Thyroid gland (tissue), 4 donors: ENCODE measurements at regions of chr2 and their contacts with region 1.

Region 1: GRCh38 chr2:222982010-222982908 is 69.7 kb upstream of the KCNE4 start:
- DNase-seq: peak; percentile 83 to 86
- H3K4me3 ChIP-seq: no peak overlapping the region
- H3K27ac ChIP-seq: no peak overlapping the region
- H3K4me1 ChIP-seq: peaks cover 6 to 9% of the 10 kb centered on the region in 2 donors
- H3K27me3 ChIP-seq: no peaks in the 10 kb centered on the region
- CTCF ChIP-seq: peak in 5 of 6 experiments; percentile 20 to 77 (median 68)
- POLR2A ChIP-seq: no peak

Region 2: DNA sequence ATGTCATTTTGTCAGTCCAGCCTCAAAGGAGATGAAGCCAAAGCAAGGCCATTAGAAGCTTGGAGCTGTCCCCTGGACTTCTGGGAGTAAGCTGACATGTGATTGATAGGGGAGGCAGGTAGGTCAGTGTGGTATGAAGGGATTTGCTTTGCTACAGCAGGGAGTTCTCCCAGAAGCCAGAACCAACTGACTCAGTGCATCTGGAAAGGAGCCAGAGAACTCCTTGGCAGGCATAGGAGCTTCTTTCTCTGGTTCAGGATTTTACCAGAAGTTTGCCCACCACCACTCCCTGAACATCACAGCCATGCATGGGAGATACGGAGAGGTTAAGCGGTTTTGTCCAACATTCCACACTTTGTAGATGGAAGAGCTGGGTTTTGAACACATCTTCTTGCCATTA is 45.2 kb after region 1 on chr2:
- intact Hi-C with region 1: no loop called
- DNase-seq: peak in 1 of 2 donors; percentile 29
- H3K4me3 ChIP-seq: no peak overlapping the region
- H3K27ac ChIP-seq: no peak overlapping the region
- H3K4me1 ChIP-seq: no peaks in the 10 kb centered on the region
- H3K27me3 ChIP-seq: no peaks in the 10 kb centered on the region
- CTCF ChIP-seq: no peak
- POLR2A ChIP-seq: no peak

Region 3: DNA sequence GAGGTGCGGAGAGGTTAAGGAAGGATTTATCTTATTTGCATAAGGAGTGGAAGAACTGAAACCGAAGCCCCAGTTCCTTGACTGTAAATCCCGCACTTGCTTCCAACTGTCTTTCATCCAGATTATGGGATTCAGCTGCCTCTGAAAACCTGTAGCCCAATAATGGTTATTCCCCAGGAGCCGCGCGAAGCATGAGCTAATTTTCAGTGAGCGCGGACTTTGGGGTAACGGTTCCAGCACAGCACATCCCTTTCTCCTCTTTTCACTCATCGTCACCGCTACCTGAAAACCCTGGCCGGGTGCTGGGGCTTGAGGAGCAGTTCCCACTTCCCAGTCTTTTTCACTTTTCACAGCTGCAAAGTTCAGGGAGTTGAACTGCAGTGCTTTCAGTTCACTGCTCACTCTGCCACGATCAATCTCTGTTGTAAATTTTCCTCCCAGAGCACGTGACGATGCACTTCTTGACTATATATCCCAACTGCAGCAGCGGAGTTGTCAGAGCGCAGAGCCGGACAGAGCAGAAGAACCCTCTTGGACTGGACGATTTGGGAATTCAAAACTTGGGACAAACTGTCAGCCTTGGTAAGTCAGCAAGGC is 69.5 kb after region 1 on chr2 and contains the start of gene KCNE4:
- intact Hi-C with region 1: loop called (anchors 10 kb)
- DNase-seq: peak; percentile 48 to 55
- H3K4me3 ChIP-seq: peak within 1 kb of the TSS; percentile 2 to 36 (median 28)
- H3K27ac ChIP-seq: peak within 1 kb of the TSS; percentile 77 to 99 (median 89)
- H3K4me1 ChIP-seq: peaks cover 30 to 32% of the 10 kb centered on the region in 2 donors
- H3K27me3 ChIP-seq: no peaks in the 10 kb centered on the region
- CTCF ChIP-seq: no peak
- POLR2A ChIP-seq: peak in 1 of 2 donors; percentile 84
- total RNA-seq, gene KCNE4: 7.8 to 19.6 (median 18.4) TPM